ENCODE measurements at regions of chr3 and their contacts with region 1.

Region 1: GRCh38 chr3:161523916-161524315 is 27.3 kb downstream of the OTOL1 start:
- DNase-seq: no peak
- ATAC-seq: no peak
- H3K4me3 ChIP-seq: no peak overlapping the region
- H3K27ac ChIP-seq: no peak overlapping the region
- H3K4me1 ChIP-seq: no peaks in the 10 kb centered on the region
- H3K27me3 ChIP-seq: no peaks in the 10 kb centered on the region
- CTCF ChIP-seq: no peak
- POLR2A ChIP-seq: no peak

Region 2: DNA sequence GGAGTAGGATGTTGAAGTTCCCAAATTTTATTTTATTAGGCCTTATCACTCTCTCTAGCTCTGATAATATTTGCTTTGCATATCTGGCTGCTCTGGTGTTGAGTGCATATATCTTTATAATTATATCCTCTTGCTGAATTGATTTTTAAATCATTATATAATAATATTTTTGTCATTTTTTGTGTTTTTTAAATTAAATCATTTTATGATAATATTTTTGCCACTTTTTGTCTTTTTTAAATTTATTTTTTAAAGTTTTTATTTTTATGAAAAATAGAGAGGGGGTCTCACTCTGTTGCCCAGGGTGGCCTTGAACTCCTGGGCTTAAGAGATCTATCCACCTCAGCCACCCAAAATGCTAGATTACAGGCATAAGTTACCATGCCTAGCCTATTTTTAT is 61.8 kb before region 1 on chr3:
- intact Hi-C with region 1: loop called in 1 of 10 experiments (anchors 10 kb)
- DNase-seq: no peak
- ATAC-seq: no peak
- H3K4me3 ChIP-seq: no peak overlapping the region
- H3K27ac ChIP-seq: no peak overlapping the region
- H3K4me1 ChIP-seq: no peaks in the 10 kb centered on the region
- H3K27me3 ChIP-seq: no peaks in the 10 kb centered on the region
- CTCF ChIP-seq: no peak
- POLR2A ChIP-seq: no peak